Prostate gland (tissue), 2 donors: ENCODE measurements at regions of chr2 and their contacts with region 1.

Region 1: GRCh38 chr2:42663106-42663780 is 94.8 kb downstream of the MTA3 start:
- DNase-seq: peak; percentile 63
- H3K4me3 ChIP-seq: no peak overlapping the region
- H3K27ac ChIP-seq: no peak overlapping the region
- H3K4me1 ChIP-seq: no peaks in the 10 kb centered on the region
- H3K27me3 ChIP-seq: no peaks in the 10 kb centered on the region
- CTCF ChIP-seq: peak; percentile 78 to 93 (median 90)
- POLR2A ChIP-seq: no peak

Region 2: GRCh38 chr2:41720331-41720730 is 942.9 kb before region 1 on chr2:
- intact Hi-C with region 1: no loop called
- DNase-seq: no peak
- H3K4me3 ChIP-seq: no peak overlapping the region
- H3K27ac ChIP-seq: no peak overlapping the region
- H3K4me1 ChIP-seq: no peaks in the 10 kb centered on the region
- H3K27me3 ChIP-seq: no peaks in the 10 kb centered on the region
- CTCF ChIP-seq: no peak
- POLR2A ChIP-seq: no peak

Region 3: GRCh38 chr2:42494355-42495233 is 168.6 kb before region 1 on chr2:
- intact Hi-C with region 1: loop called (anchors 2 kb)
- DNase-seq: peak; percentile 76
- H3K4me3 ChIP-seq: peak overlapping the region; percentile 53 to 54
- H3K27ac ChIP-seq: peak overlapping the region; percentile 58 to 73
- H3K4me1 ChIP-seq: no peaks in the 10 kb centered on the region
- H3K27me3 ChIP-seq: no peaks in the 10 kb centered on the region
- CTCF ChIP-seq: peak; percentile 40 to 88 (median 79)
- POLR2A ChIP-seq: no peak

Region 4: GRCh38 chr2:42513257-42513918 is 149.9 kb before region 1 on chr2:
- intact Hi-C with region 1: loop called (anchors 5 kb)
- DNase-seq: peak; percentile 25
- H3K4me3 ChIP-seq: no peak overlapping the region
- H3K27ac ChIP-seq: no peak overlapping the region
- H3K4me1 ChIP-seq: no peaks in the 10 kb centered on the region
- H3K27me3 ChIP-seq: no peaks in the 10 kb centered on the region
- CTCF ChIP-seq: peak in 3 of 4 experiments; percentile 52 to 62 (median 53)
- POLR2A ChIP-seq: no peak